ENCODE measurements at regions of chr18 and their contacts with region 1.

Region 1: GRCh38 chr18:3665780-3666525 is 216.0 kb downstream of the TGIF1 start:
- DNase-seq: peak; percentile 81
- H3K4me3 Mint-ChIP-seq: no peak overlapping the region
- H3K27ac Mint-ChIP-seq: no peak overlapping the region
- H3K4me1 Mint-ChIP-seq: peaks cover 23% of the 10 kb centered on the region
- H3K27me3 Mint-ChIP-seq: no peaks in the 10 kb centered on the region

Region 2: GRCh38 chr18:3269241-3269913 is 396.6 kb before region 1 on chr18:
- CTCF ChIA-PET with region 1: interaction called, 275 read pairs
- POLR2A ChIA-PET with region 1: interaction called, 4 read pairs
- intact Hi-C with region 1: no loop called
- DNase-seq: no peak
- H3K4me3 Mint-ChIP-seq: no peak overlapping the region
- H3K27ac Mint-ChIP-seq: peak overlapping the region; percentile 24
- H3K4me1 Mint-ChIP-seq: peaks cover 81% of the 10 kb centered on the region
- H3K27me3 Mint-ChIP-seq: no peaks in the 10 kb centered on the region

Region 3: GRCh38 chr18:3321133-3321812 is 344.7 kb before region 1 on chr18:
- CTCF ChIA-PET with region 1: interaction called, 11 read pairs
- POLR2A ChIA-PET with region 1: no interaction called
- intact Hi-C with region 1: no loop called
- DNase-seq: peak; percentile 56
- H3K4me3 Mint-ChIP-seq: no peak overlapping the region
- H3K27ac Mint-ChIP-seq: no peak overlapping the region
- H3K4me1 Mint-ChIP-seq: peaks cover 32% of the 10 kb centered on the region
- H3K27me3 Mint-ChIP-seq: peaks cover 7% of the 10 kb centered on the region

Region 4: DNA sequence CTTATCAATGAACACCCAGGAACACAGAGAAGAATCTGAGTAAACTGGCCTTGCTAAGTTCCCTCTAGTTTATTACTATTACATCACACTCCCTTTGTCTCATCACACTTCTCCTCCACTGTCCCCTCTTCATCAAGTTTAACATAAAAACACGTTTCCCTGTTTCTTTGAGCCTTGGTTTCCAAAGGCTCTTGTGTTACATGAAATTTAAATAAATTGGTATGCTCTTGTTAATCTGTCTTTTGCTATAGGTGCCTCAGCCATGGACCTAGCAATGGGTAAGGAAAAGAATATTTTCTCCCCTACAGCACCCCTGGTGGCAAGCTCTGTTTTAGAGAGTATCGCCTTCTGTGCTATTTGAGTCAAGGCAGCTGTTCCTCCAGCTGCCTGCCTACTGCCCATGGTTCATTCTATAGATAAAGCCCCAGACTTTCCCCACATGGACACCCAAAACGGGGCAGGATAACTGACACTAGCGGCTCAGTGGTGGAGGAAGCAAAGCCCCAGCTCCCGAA is 184.2 kb before region 1 on chr18:
- CTCF ChIA-PET with region 1: interaction called, 12 read pairs
- POLR2A ChIA-PET with region 1: no interaction called
- intact Hi-C with region 1: no loop called
- DNase-seq: peak; percentile 40
- H3K4me3 Mint-ChIP-seq: no peak overlapping the region
- H3K27ac Mint-ChIP-seq: no peak overlapping the region
- H3K4me1 Mint-ChIP-seq: peaks cover 9% of the 10 kb centered on the region
- H3K27me3 Mint-ChIP-seq: peaks cover 1% of the 10 kb centered on the region

Region 5: GRCh38 chr18:3604498-3605408 is 61.2 kb before region 1 on chr18:
- CTCF ChIA-PET with region 1: interaction called, 11 read pairs
- POLR2A ChIA-PET with region 1: interaction called, 6 read pairs
- intact Hi-C with region 1: no loop called
- DNase-seq: peak; percentile 58
- H3K4me3 Mint-ChIP-seq: no peak overlapping the region
- H3K27ac Mint-ChIP-seq: no peak overlapping the region
- H3K4me1 Mint-ChIP-seq: peaks cover 15% of the 10 kb centered on the region
- H3K27me3 Mint-ChIP-seq: no peaks in the 10 kb centered on the region

Region 6: DNA sequence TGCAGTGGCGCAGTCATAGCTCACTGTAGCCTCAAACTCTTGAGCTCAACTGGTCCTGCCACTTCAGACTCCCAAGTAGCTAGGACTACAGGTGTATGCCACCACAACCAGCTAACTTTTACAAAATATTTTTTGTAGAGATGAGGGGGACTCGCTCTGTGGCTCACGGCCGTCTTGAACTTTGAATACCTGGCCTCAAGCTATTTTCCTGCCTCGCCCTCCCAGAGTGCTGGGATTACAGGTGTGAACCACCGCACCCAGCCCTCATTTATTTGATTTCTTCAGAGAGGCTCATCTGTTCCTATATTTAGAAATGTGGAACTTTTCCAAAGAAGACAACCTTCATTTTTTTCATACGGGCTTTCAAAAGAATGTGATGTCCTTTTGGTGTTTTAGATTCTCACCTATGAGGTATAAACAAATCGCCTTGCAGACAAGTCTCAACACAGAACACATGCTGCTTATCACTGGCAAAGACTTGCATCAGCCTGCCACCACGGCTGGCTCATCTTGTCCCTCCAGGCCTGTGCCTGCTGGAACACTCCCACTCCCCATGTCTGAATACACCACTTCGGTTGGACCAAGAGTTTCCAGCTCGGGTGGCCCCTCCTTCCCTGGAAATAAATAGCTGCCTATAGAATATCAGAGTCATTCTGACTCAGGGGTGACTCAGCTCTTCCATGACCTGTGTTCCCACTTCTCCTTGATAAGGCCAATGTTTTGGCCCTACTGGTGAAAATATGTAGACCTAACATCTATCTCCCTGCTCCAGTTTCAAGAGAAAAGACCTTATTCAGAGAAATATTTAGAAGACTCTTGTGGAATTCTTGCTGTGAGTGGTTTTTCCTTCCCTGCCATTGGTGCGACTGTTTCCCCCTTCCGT is 13.3 kb before region 1 on chr18:
- CTCF ChIA-PET with region 1: interaction called, 21 read pairs
- POLR2A ChIA-PET with region 1: interaction called, 3 read pairs
- intact Hi-C with region 1: loop called (anchors 1 kb)
- DNase-seq: peak; percentile 88
- H3K4me3 Mint-ChIP-seq: peak overlapping the region; percentile 9
- H3K27ac Mint-ChIP-seq: peak overlapping the region; percentile 83
- H3K4me1 Mint-ChIP-seq: peaks cover 34% of the 10 kb centered on the region
- H3K27me3 Mint-ChIP-seq: no peaks in the 10 kb centered on the region

Region 7: GRCh38 chr18:3782901-3783300 is 116.9 kb after region 1 on chr18:
- CTCF ChIA-PET with region 1: no interaction called
- POLR2A ChIA-PET with region 1: no interaction called
- intact Hi-C with region 1: no loop called
- DNase-seq: no peak
- H3K4me3 Mint-ChIP-seq: no peak overlapping the region
- H3K27ac Mint-ChIP-seq: no peak overlapping the region
- H3K4me1 Mint-ChIP-seq: no peaks in the 10 kb centered on the region
- H3K27me3 Mint-ChIP-seq: peaks cover 5% of the 10 kb centered on the region

Region 8: GRCh38 chr18:3931542-3932112 is 265.7 kb after region 1 on chr18:
- CTCF ChIA-PET with region 1: no interaction called
- POLR2A ChIA-PET with region 1: no interaction called
- intact Hi-C with region 1: no loop called
- DNase-seq: no peak
- H3K4me3 Mint-ChIP-seq: no peak overlapping the region
- H3K27ac Mint-ChIP-seq: no peak overlapping the region
- H3K4me1 Mint-ChIP-seq: no peaks in the 10 kb centered on the region
- H3K27me3 Mint-ChIP-seq: no peaks in the 10 kb centered on the region

Region 9: DNA sequence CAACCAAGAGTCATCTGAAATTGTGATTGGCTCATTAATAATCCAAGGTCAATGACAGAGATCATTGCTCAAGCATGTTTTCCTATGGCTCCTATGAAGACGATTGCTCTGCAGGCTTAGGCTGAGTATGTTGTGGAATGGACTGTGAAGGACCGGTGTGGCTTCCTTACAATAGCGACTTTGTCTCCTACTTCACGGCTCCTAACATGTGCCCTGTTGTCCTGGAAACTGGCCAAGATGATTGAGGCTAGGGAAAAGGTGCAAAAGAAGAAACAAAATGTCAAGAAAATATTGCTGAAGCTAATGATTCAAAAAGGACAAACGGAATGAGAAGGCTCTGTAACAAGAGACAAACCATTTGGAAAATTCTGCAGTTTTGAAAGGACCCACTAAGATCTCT is 764.9 kb after region 1 on chr18:
- CTCF ChIA-PET with region 1: no interaction called
- POLR2A ChIA-PET with region 1: no interaction called
- intact Hi-C with region 1: no loop called
- DNase-seq: no peak
- H3K4me3 Mint-ChIP-seq: no peak overlapping the region
- H3K27ac Mint-ChIP-seq: no peak overlapping the region
- H3K4me1 Mint-ChIP-seq: no peaks in the 10 kb centered on the region
- H3K27me3 Mint-ChIP-seq: no peaks in the 10 kb centered on the region